ENCODE measurements at regions of chr16 and their contacts with region 1.

Region 1: GRCh38 chr16:20849587-20850390 is 43.5 kb downstream of the REXO5 start:
- DNase-seq: peak; percentile 78
- H3K4me3 Mint-ChIP-seq: no peak overlapping the region
- H3K27ac Mint-ChIP-seq: peak overlapping the region; percentile 79
- H3K4me1 Mint-ChIP-seq: peaks cover 19% of the 10 kb centered on the region
- H3K27me3 Mint-ChIP-seq: no peaks in the 10 kb centered on the region
- CTCF ChIP-seq: peak; percentile 95

Region 2: GRCh38 chr16:20866145-20866772 is 16.5 kb after region 1 on chr16:
- CTCF ChIA-PET with region 1: interaction called, 18 read pairs
- POLR2A ChIA-PET with region 1: interaction called, 260 read pairs
- intact Hi-C with region 1: no loop called
- DNase-seq: peak; percentile 91
- H3K4me3 Mint-ChIP-seq: peak overlapping the region; percentile 64
- H3K27ac Mint-ChIP-seq: peak overlapping the region; percentile 99
- H3K4me1 Mint-ChIP-seq: peaks cover 63% of the 10 kb centered on the region
- H3K27me3 Mint-ChIP-seq: no peaks in the 10 kb centered on the region
- CTCF ChIP-seq: no peak

Region 3: GRCh38 chr16:20910781-20911321 is 61.1 kb after region 1 on chr16:
- CTCF ChIA-PET with region 1: interaction called, 33 read pairs
- POLR2A ChIA-PET with region 1: interaction called, 47 read pairs
- intact Hi-C with region 1: loop called (anchors 2 kb)
- DNase-seq: peak; percentile 89
- H3K4me3 Mint-ChIP-seq: peak overlapping the region; percentile 47
- H3K27ac Mint-ChIP-seq: peak overlapping the region; percentile 97
- H3K4me1 Mint-ChIP-seq: peaks cover 41% of the 10 kb centered on the region
- H3K27me3 Mint-ChIP-seq: no peaks in the 10 kb centered on the region
- CTCF ChIP-seq: no peak

Region 4: GRCh38 chr16:20956319-20956718 is 106.5 kb after region 1 on chr16:
- CTCF ChIA-PET with region 1: interaction called, 10 read pairs
- POLR2A ChIA-PET with region 1: no interaction called
- intact Hi-C with region 1: loop called (anchors 1 kb)
- DNase-seq: peak; percentile 25
- H3K4me3 Mint-ChIP-seq: no peak overlapping the region
- H3K27ac Mint-ChIP-seq: no peak overlapping the region
- H3K4me1 Mint-ChIP-seq: no peaks in the 10 kb centered on the region
- H3K27me3 Mint-ChIP-seq: no peaks in the 10 kb centered on the region
- CTCF ChIP-seq: no peak

Region 5: GRCh38 chr16:21083729-21084268 is 234.0 kb after region 1 on chr16:
- CTCF ChIA-PET with region 1: interaction called, 89 read pairs
- POLR2A ChIA-PET with region 1: interaction called, 7 read pairs
- intact Hi-C with region 1: loop called (anchors 1 kb)
- DNase-seq: peak; percentile 70
- H3K4me3 Mint-ChIP-seq: no peak overlapping the region
- H3K27ac Mint-ChIP-seq: no peak overlapping the region
- H3K4me1 Mint-ChIP-seq: peaks cover 6% of the 10 kb centered on the region
- H3K27me3 Mint-ChIP-seq: no peaks in the 10 kb centered on the region
- CTCF ChIP-seq: peak; percentile 76

Region 6: GRCh38 chr16:21184834-21185233 is 335.0 kb after region 1 on chr16:
- CTCF ChIA-PET with region 1: interaction called, 6 read pairs
- POLR2A ChIA-PET with region 1: interaction called, 4 read pairs
- intact Hi-C with region 1: loop called (anchors 1 kb)
- DNase-seq: no peak
- H3K4me3 Mint-ChIP-seq: no peak overlapping the region
- H3K27ac Mint-ChIP-seq: no peak overlapping the region
- H3K4me1 Mint-ChIP-seq: no peaks in the 10 kb centered on the region
- H3K27me3 Mint-ChIP-seq: no peaks in the 10 kb centered on the region
- CTCF ChIP-seq: no peak

Region 7: DNA sequence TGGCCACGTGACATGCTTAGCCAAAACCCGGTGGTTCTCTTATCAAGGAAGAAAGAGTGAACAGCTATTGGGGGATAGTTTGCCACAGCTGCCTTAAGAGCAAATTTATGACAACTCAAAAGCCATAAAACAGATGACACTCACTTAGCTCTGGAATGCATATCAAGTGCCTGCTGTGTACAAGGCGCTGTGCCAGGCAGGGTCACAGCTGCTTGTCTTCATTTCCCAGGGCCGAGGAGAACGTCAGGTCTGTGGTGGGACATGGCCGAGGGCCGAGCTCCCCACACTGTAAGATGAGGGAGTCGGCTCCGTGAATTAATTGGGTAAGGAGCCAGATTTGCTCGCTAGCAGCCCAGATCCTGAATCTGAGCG is 1370.3 kb after region 1 on chr16:
- CTCF ChIA-PET with region 1: no interaction called
- POLR2A ChIA-PET with region 1: no interaction called
- intact Hi-C with region 1: no loop called
- DNase-seq: no peak
- H3K4me3 Mint-ChIP-seq: no peak overlapping the region
- H3K27ac Mint-ChIP-seq: no peak overlapping the region
- H3K4me1 Mint-ChIP-seq: peaks cover 15% of the 10 kb centered on the region
- H3K27me3 Mint-ChIP-seq: no peaks in the 10 kb centered on the region
- CTCF ChIP-seq: no peak